CD8-positive, alpha-beta T cell (primary cell): ENCODE measurements at regions of chr1 and their contacts with region 1.

Region 1: GRCh38 chr1:8727809-8728213 is 89.6 kb downstream of the RERE start:
- DNase-seq: no peak
- ATAC-seq: no peak
- H3K4me3 ChIP-seq: no peak overlapping the region
- H3K4me3 Mint-ChIP-seq: no peak overlapping the region
- H3K27ac ChIP-seq: no peak overlapping the region
- H3K27ac Mint-ChIP-seq: no peak overlapping the region
- H3K4me1 ChIP-seq: no peaks in the 10 kb centered on the region
- H3K4me1 Mint-ChIP-seq: peaks cover 2% of the 10 kb centered on the region
- H3K27me3 ChIP-seq: no peaks in the 10 kb centered on the region
- H3K27me3 Mint-ChIP-seq: no peaks in the 10 kb centered on the region
- CTCF ChIP-seq: no peak

Region 2: DNA sequence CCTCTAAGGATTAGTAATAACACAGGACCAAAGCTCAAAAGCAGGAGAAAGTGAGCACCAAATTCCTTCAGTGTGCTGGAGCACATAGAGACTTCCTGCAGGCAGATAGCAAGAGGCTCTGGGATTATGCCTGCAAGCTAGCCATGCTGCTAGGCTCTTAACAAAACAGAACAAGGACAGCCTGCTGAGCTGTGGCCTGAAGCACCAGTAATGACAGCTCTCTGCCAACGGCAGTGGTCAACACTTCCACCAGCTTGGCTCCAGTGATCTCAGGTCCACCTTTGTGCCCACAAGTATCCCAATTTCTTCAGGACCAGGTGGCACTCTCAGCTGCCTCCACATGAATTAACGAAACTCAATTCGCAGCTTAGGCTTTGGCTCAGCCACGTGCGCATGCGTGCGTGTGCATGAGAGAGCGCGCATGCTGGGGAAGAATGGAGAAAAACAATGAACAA is 345.7 kb before region 1 on chr1:
- CTCF ChIA-PET with region 1: no interaction called
- POLR2A ChIA-PET with region 1: no interaction called
- intact Hi-C with region 1: loop called in 1 of 2 experiments (anchors 10 kb)
- DNase-seq: no peak
- ATAC-seq: no peak
- H3K4me3 ChIP-seq: no peak overlapping the region
- H3K4me3 Mint-ChIP-seq: no peak overlapping the region
- H3K27ac ChIP-seq: no peak overlapping the region
- H3K27ac Mint-ChIP-seq: peak overlapping the region; percentile 90
- H3K4me1 ChIP-seq: peaks cover 38% of the 10 kb centered on the region
- H3K4me1 Mint-ChIP-seq: peaks cover 85% of the 10 kb centered on the region
- H3K27me3 ChIP-seq: no peaks in the 10 kb centered on the region
- H3K27me3 Mint-ChIP-seq: no peaks in the 10 kb centered on the region
- CTCF ChIP-seq: no peak

Region 3: DNA sequence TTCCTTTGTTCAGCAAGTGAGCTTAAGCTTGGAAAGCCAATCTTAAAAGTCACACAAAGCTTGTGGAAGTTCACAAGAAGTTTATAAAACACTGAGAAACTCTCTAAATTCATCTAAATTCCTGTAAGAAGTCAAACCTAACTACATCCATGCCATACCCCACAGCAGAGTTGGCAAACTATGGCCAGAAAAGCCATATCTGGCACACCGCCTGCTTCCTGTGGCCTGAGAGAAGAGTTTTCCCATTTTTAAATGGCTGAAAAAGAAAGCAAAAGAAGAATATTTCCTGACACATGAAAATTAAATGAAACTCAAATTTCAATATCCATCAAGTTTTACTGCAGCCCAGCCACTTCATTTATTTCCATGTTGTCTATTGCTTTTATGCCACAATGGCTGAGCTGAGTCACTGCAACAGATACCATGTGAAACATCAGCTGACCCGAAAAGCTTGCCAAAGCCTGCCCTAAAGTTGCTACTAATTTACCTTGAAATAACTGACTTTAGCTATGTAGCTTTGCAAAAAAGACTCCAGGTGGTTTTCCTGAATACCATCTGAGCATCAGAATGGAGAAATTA is 172.8 kb before region 1 on chr1:
- CTCF ChIA-PET with region 1: interaction called, 154 read pairs
- POLR2A ChIA-PET with region 1: no interaction called
- intact Hi-C with region 1: no loop called
- DNase-seq: no peak
- ATAC-seq: no peak
- H3K4me3 ChIP-seq: no peak overlapping the region
- H3K4me3 Mint-ChIP-seq: no peak overlapping the region
- H3K27ac ChIP-seq: no peak overlapping the region
- H3K27ac Mint-ChIP-seq: no peak overlapping the region
- H3K4me1 ChIP-seq: peaks cover 16% of the 10 kb centered on the region
- H3K4me1 Mint-ChIP-seq: peaks cover 22% of the 10 kb centered on the region
- H3K27me3 ChIP-seq: no peaks in the 10 kb centered on the region
- H3K27me3 Mint-ChIP-seq: no peaks in the 10 kb centered on the region
- CTCF ChIP-seq: no peak

Region 4: DNA sequence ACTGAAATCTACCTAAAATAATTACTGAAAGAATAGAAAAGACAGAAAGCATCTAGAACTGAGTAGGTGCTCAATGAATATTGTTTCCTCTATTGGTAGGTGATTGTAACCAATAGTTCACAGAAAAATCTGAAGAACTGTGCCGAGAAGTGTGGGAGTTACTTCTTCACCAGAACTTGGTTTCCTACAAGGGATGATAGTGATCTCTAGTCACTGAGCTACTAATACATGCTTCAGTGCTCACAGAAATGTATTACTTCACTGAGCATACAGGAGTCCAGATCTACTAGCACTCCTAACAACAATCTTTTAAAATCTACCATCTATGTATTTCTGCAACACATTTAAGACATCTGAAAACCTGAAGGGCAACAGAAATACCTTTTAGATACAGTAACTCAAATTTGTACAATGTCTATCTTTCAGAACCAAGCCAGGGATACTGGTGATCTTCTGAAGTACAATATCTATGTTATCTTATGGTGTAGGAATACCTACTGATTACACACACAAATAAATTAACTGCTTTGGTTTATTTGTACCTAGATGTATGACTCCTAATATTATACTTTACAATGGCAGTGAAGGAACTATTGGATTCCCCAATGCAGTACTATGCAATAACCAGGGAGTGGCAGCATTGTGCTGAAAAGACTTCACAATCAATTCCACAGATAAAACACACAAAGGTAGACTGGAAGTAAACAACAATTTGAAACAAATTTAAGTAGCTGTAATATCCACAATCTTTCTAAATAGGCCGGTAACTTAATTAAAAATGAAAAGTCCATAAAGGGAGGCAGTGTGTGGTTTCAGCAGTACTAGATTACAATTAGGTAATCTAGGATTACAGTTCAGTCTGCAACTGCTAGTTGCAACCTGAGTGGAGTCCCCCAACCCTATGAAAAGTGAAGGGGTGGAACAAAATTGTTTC is 166.9 kb before region 1 on chr1:
- CTCF ChIA-PET with region 1: interaction called, 154 read pairs
- POLR2A ChIA-PET with region 1: no interaction called
- intact Hi-C with region 1: loop called (anchors 1 kb)
- DNase-seq: peak in 5 of 9 experiments; percentile 28 to 70 (median 31)
- ATAC-seq: peak; percentile 94
- H3K4me3 ChIP-seq: no peak overlapping the region
- H3K4me3 Mint-ChIP-seq: no peak overlapping the region
- H3K27ac ChIP-seq: no peak overlapping the region
- H3K27ac Mint-ChIP-seq: no peak overlapping the region
- H3K4me1 ChIP-seq: no peaks in the 10 kb centered on the region
- H3K4me1 Mint-ChIP-seq: peaks cover 5% of the 10 kb centered on the region
- H3K27me3 ChIP-seq: no peaks in the 10 kb centered on the region
- H3K27me3 Mint-ChIP-seq: no peaks in the 10 kb centered on the region
- CTCF ChIP-seq: peak; percentile 99

Region 5: GRCh38 chr1:8671306-8671917 is 56.4 kb before region 1 on chr1:
- CTCF ChIA-PET with region 1: interaction called, 4 read pairs
- POLR2A ChIA-PET with region 1: no interaction called
- intact Hi-C with region 1: loop called in 1 of 2 experiments (anchors 5 kb)
- DNase-seq: peak in 3 of 9 experiments; percentile 15 to 65 (median 50)
- ATAC-seq: no peak
- H3K4me3 ChIP-seq: no peak overlapping the region
- H3K4me3 Mint-ChIP-seq: no peak overlapping the region
- H3K27ac ChIP-seq: no peak overlapping the region
- H3K27ac Mint-ChIP-seq: no peak overlapping the region
- H3K4me1 ChIP-seq: peaks cover 21% of the 10 kb centered on the region
- H3K4me1 Mint-ChIP-seq: peaks cover 33% of the 10 kb centered on the region
- H3K27me3 ChIP-seq: no peaks in the 10 kb centered on the region
- H3K27me3 Mint-ChIP-seq: no peaks in the 10 kb centered on the region
- CTCF ChIP-seq: peak; percentile 70

Region 6: GRCh38 chr1:8717148-8717547 is 10.7 kb before region 1 on chr1:
- CTCF ChIA-PET with region 1: interaction called, 12 read pairs
- POLR2A ChIA-PET with region 1: no interaction called
- intact Hi-C with region 1: no loop called
- DNase-seq: no peak
- ATAC-seq: no peak
- H3K4me3 ChIP-seq: no peak overlapping the region
- H3K4me3 Mint-ChIP-seq: no peak overlapping the region
- H3K27ac ChIP-seq: no peak overlapping the region
- H3K27ac Mint-ChIP-seq: no peak overlapping the region
- H3K4me1 ChIP-seq: peaks cover 9% of the 10 kb centered on the region
- H3K4me1 Mint-ChIP-seq: peaks cover 17% of the 10 kb centered on the region
- H3K27me3 ChIP-seq: no peaks in the 10 kb centered on the region
- H3K27me3 Mint-ChIP-seq: no peaks in the 10 kb centered on the region
- CTCF ChIP-seq: no peak

Region 7: DNA sequence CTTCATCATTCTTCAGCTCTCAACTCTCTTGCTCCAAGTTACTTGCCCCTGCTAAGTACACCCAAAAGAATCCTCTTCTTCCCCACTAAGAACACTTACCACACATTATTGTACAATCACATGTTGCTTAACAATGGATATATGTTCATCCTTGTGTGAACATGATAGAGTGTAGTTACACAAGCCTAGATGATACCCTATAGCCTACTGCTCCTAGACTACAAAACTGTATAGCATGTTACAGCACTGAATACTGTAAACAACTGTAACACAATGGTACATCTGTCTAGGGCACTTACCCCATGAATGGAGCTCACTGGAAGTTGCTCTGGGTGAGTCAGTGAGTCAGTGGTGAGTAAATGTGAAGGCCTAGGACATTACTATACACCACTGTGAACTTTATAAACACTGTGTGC is 12.2 kb after region 1 on chr1:
- CTCF ChIA-PET with region 1: interaction called, 12 read pairs
- POLR2A ChIA-PET with region 1: interaction called, 3 read pairs
- intact Hi-C with region 1: no loop called
- DNase-seq: no peak
- ATAC-seq: no peak
- H3K4me3 ChIP-seq: no peak overlapping the region
- H3K4me3 Mint-ChIP-seq: no peak overlapping the region
- H3K27ac ChIP-seq: no peak overlapping the region
- H3K27ac Mint-ChIP-seq: no peak overlapping the region
- H3K4me1 ChIP-seq: no peaks in the 10 kb centered on the region
- H3K4me1 Mint-ChIP-seq: no peaks in the 10 kb centered on the region
- H3K27me3 ChIP-seq: no peaks in the 10 kb centered on the region
- H3K27me3 Mint-ChIP-seq: no peaks in the 10 kb centered on the region
- CTCF ChIP-seq: no peak

Region 8: DNA sequence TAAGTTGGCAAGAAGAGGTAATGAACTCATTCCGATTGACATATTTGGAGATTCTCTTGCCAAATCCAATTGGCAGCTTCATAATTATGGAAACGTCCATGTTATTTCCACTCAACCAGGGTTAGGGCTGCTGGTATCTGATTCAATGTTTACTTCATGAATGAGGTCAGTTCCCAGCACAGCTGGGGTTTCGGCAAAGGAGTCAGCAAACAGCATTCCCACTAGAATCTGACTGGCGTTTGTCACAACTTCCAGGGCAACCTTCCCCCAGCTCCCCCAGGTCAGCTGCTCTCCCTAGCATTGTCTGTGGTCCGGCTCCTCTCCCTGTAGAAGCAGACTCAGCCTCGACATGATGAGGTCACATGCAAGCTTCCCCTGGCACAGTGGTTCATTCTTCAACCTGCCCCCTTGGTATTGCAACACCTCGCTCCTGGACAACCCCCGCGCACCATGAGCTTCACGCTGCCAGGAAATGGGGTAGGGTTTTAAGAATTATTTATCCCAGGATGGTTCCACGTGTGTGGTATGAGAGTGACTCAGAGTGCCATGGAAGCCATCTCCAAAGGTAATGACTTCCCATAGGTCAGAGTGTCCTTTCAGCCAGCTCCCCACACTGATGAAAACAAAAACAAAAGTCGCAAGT is 710.7 kb after region 1 on chr1:
- CTCF ChIA-PET with region 1: no interaction called
- POLR2A ChIA-PET with region 1: no interaction called
- intact Hi-C with region 1: no loop called
- DNase-seq: no peak
- ATAC-seq: no peak
- H3K4me3 ChIP-seq: no peak overlapping the region
- H3K4me3 Mint-ChIP-seq: no peak overlapping the region
- H3K27ac ChIP-seq: no peak overlapping the region
- H3K27ac Mint-ChIP-seq: no peak overlapping the region
- H3K4me1 ChIP-seq: no peaks in the 10 kb centered on the region
- H3K4me1 Mint-ChIP-seq: no peaks in the 10 kb centered on the region
- H3K27me3 ChIP-seq: no peaks in the 10 kb centered on the region
- H3K27me3 Mint-ChIP-seq: no peaks in the 10 kb centered on the region
- CTCF ChIP-seq: no peak